ENCODE measurements at regions of chr3 and their contacts with region 1.

Region 1: DNA sequence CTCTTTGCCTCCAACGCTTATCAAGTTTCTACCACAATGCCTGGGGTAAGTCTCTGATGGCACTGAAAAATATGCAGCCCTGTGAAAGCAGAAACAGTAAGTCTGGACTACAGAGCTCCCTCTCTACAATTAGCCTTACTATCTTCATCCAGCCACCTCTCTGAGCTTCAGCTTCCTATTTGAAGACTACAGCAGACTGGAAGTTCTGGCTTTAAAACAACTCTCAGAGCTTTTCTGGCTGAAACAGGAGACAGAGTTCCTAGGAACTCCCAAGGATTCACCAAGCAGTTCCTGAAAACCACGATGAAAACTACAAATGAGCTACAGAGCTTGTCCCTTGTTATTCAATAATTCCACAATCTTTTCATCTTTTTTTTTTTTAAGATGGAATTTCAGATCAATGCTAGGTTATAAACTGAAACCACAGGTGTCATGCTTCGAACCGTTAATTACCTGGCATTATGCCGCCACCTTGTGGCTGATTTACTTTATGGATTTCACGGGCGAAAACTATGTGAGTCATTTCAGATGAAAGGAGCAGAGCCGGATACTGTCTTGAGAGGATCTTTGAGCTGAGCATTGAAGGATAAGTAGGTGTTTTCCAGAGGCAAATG is 3.9 kb downstream of the CRYGS start:
- H3K4me3 ChIP-seq: no peak overlapping the region
- H3K27ac ChIP-seq: no peak overlapping the region
- H3K4me1 ChIP-seq: no peaks in the 10 kb centered on the region; the same call in 1 of the 2 replicates
- CTCF ChIP-seq: peak; percentile 26; the same call in 1 of the 2 replicates

Region 2: DNA sequence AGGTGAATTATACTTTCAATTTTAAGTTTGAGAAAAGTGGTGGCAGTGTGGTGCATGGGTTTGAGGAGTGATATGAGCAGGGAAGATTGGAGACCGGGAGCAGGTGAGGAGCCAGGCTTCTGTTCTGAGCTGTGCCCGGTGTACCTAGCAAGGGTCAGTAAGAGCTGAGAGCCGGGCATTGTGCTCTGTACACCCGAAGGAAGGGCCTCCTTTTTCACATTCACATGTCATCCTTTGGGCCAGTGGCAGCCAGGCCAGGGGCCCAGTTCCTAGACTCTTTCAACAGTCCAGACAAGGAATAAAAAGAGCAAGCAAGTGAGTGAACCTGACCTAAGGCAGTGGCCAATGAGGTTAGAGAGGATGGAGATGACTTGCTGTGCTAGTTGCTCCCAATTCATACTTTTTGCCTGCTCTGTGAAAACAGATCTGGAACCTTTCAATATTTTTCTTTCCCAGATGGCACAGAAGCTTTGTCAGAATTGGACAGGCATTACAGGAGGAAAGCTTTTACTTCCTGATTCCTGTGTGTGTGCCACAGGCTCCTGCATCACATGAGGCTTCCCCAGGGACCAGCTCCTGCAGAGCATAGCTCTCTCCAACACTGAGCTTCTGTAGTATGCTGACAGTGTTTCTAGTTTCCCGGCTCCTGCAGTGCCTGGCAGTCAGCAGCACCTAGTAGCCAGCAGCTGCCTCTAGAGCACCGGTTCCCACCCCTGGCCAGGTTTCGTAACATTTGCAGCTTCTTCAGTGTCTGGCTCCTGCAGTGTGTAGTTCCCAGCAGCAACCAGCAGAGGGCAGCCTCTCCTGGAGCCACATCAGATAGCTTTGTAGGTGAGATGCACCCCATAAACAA is 597.2 kb before region 1 on chr3:
- CTCF ChIA-PET with region 1: interaction called, 10 read pairs
- POLR2A ChIA-PET with region 1: no interaction called
- H3K4me3 ChIP-seq: no peak overlapping the region
- H3K27ac ChIP-seq: no peak overlapping the region
- H3K4me1 ChIP-seq: no peaks in the 10 kb centered on the region
- CTCF ChIP-seq: peak; percentile 44; the same call in 1 of the 2 replicates

Region 3: GRCh38 chr3:185983495-185984141 is 556.7 kb before region 1 on chr3:
- CTCF ChIA-PET with region 1: interaction called, 27 read pairs
- POLR2A ChIA-PET with region 1: no interaction called
- H3K4me3 ChIP-seq: no peak overlapping the region
- H3K27ac ChIP-seq: no peak overlapping the region
- H3K4me1 ChIP-seq: no peaks in the 10 kb centered on the region
- CTCF ChIP-seq: peak; percentile 45; the same call in 1 of the 2 replicates

Region 4: GRCh38 chr3:186277268-186277909 is 262.9 kb before region 1 on chr3:
- CTCF ChIA-PET with region 1: interaction called, 32 read pairs
- POLR2A ChIA-PET with region 1: no interaction called
- H3K4me3 ChIP-seq: no peak overlapping the region
- H3K27ac ChIP-seq: no peak overlapping the region
- H3K4me1 ChIP-seq: no peaks in the 10 kb centered on the region
- CTCF ChIP-seq: peak; percentile 25; the same call in 1 of the 2 replicates

Region 5: GRCh38 chr3:186502138-186502948 is 38.0 kb before region 1 on chr3:
- CTCF ChIA-PET with region 1: no interaction called
- POLR2A ChIA-PET with region 1: no interaction called
- H3K4me3 ChIP-seq: no peak overlapping the region
- H3K27ac ChIP-seq: no peak overlapping the region
- H3K4me1 ChIP-seq: no peaks in the 10 kb centered on the region
- CTCF ChIP-seq: no peak

Region 6: DNA sequence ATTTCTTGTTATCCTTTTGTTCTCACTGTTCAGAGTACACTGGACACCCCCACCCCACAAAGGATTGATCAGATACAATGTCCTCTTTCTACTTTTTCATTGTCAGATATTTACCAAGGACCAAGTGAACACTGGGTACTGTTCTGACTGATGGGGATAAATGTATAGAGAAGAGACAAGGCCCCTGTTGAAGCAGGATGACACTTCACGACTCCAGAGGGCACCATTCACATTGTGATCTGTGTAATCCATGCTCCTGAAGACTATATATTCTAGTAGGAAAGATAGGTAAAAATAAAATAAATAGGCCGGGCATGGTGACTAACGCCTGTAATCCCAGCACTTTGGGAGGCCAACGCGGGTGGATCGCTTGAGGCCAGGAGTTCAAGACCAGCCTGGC is 11.1 kb after region 1 on chr3:
- CTCF ChIA-PET with region 1: interaction called, 16 read pairs
- POLR2A ChIA-PET with region 1: no interaction called
- H3K4me3 ChIP-seq: no peak overlapping the region
- H3K27ac ChIP-seq: no peak overlapping the region
- H3K4me1 ChIP-seq: no peaks in the 10 kb centered on the region
- CTCF ChIP-seq: no peak

Measured in HEK293 (cell line).